ENCODE measurements at regions of chr11 and their contacts with region 1.

Region 1: DNA sequence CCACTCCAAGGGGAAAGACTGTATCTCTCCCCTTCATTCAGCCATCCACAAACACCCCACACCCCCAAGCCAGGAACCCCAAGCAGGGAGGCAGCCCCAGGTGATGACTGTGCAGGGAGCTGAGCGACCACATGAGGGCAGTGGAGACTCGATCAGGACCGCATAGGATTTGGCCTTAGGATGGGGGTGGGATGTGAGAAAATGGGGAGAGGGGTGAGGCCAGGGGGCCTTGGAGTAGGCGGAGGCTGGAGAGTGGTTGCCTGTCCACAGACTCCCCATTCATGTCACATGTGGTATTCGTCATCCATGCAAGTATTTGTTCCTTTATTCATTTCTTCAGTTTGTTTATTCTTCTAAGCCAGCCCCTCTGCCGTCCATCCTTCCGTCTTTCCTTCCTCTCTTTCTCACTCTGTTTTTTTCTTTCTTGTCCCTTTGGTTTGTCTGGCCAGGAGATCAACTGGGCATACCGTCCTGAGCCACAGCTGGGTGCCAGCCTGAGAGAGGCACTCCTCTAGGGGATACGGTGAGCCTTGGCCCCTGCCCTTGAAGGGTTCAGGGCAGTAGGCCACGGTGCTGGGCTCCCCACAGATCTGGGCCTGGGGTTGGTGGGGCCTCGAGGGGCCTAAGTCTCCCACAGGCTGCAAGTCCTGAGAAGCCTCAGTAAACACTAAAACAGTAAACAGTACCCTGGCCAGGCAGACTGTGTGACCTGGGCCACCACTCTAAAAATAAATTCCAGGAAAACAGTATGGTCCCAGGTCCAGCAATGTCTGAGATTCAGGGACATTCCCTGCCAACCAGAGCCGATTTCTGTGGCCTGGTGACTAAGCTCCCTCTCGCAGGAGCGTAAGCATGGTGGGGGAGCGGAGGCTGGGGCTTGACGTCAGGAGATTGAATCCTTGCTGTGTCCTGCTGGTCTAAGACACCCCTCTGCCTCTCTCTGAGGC is 2.5 kb upstream of the RHOD start:
- DNase-seq: peak; percentile 72
- ATAC-seq: peak; percentile 18
- H3K4me3 ChIP-seq: no peak overlapping the region
- H3K27ac ChIP-seq: peak overlapping the region; percentile 98
- H3K4me1 ChIP-seq: peaks cover 37% of the 10 kb centered on the region
- H3K27me3 ChIP-seq: no peaks in the 10 kb centered on the region
- CTCF ChIP-seq: peak; percentile 94

Region 2: DNA sequence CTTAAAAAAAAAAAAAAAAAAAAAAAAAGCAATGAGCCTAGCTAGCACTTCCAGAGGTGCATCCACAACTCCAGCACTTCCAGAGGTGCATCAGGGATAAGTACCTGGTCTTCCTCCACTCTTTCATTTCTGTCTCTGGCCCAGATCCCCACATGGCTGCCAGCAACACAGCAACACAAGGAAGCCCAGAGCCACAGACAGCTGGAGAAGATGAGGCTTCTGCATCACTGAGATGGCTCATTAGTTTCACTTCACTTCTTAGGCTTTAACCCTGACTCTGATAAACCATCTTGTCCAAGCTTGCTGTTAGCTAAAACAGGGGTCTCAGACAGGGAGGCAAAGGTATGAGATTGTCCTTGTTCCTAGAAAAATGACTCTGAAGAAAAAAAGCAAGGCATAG is 131.6 kb before region 1 on chr11:
- CTCF ChIA-PET with region 1: interaction called, 11 read pairs
- POLR2A ChIA-PET with region 1: no interaction called
- intact Hi-C with region 1: no loop called
- DNase-seq: no peak
- ATAC-seq: no peak
- H3K4me3 ChIP-seq: no peak overlapping the region
- H3K27ac ChIP-seq: no peak overlapping the region
- H3K4me1 ChIP-seq: no peaks in the 10 kb centered on the region
- H3K27me3 ChIP-seq: no peaks in the 10 kb centered on the region
- CTCF ChIP-seq: no peak

Measured in PC-3 (cell line).